ENCODE measurements at regions of chr4 and their contacts with region 1.

Region 1: GRCh38 chr4:88514557-88515511 is 8.7 kb downstream of the PYURF start:
- DNase-seq: no peak
- H3K4me3 Mint-ChIP-seq: no peak overlapping the region
- H3K27ac Mint-ChIP-seq: no peak overlapping the region
- H3K4me1 Mint-ChIP-seq: no peaks in the 10 kb centered on the region
- H3K27me3 Mint-ChIP-seq: no peaks in the 10 kb centered on the region

Region 2: GRCh38 chr4:88033309-88033708 is 481.5 kb before region 1 on chr4:
- CTCF ChIA-PET with region 1: interaction called, 5 read pairs
- POLR2A ChIA-PET with region 1: no interaction called
- intact Hi-C with region 1: loop called (anchors 1 kb)
- DNase-seq: peak; percentile 26
- H3K4me3 Mint-ChIP-seq: no peak overlapping the region
- H3K27ac Mint-ChIP-seq: no peak overlapping the region
- H3K4me1 Mint-ChIP-seq: peaks cover 4% of the 10 kb centered on the region
- H3K27me3 Mint-ChIP-seq: no peaks in the 10 kb centered on the region

Region 3: DNA sequence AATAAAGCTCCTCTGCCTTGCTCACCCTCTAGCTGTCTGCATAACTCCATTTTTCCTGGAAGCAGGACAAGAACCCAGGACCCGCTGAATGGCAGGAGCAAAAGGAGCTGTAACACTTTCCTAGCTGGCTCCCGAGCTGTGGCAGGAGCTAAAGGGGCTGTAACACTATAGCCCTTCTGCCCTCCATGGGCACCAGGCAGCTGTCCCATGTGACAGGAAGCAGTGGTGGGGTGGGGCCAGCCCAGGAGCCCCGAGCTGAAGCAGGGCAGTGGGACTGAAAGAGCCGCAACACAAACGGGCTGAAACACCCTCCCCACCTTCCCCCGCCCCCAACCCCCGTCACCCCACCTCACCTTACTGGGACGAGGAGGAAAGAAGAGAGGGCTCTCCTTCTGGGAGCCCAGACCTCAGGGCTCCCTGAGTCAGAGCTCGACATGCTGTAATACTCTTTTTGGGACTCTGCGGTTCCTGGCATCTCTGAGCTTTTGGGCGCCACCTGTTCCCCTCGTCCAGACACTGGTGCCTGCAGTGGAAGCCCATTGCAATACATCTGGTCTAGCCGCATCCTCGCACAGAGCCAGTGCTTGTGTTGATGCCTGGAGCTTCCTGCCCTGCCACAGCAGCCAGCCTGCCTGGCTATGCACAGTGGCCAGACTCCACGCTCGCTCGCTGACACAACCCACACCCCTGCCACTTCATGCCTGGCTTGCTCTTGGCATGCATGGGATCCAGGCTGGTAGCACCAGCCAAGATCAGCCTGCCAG is 269.8 kb before region 1 on chr4:
- CTCF ChIA-PET with region 1: interaction called, 10 read pairs
- POLR2A ChIA-PET with region 1: no interaction called
- intact Hi-C with region 1: no loop called
- DNase-seq: peak; percentile 54
- H3K4me3 Mint-ChIP-seq: peak overlapping the region; percentile 49
- H3K27ac Mint-ChIP-seq: no peak overlapping the region
- H3K4me1 Mint-ChIP-seq: peaks cover 10% of the 10 kb centered on the region
- H3K27me3 Mint-ChIP-seq: no peaks in the 10 kb centered on the region

Region 4: DNA sequence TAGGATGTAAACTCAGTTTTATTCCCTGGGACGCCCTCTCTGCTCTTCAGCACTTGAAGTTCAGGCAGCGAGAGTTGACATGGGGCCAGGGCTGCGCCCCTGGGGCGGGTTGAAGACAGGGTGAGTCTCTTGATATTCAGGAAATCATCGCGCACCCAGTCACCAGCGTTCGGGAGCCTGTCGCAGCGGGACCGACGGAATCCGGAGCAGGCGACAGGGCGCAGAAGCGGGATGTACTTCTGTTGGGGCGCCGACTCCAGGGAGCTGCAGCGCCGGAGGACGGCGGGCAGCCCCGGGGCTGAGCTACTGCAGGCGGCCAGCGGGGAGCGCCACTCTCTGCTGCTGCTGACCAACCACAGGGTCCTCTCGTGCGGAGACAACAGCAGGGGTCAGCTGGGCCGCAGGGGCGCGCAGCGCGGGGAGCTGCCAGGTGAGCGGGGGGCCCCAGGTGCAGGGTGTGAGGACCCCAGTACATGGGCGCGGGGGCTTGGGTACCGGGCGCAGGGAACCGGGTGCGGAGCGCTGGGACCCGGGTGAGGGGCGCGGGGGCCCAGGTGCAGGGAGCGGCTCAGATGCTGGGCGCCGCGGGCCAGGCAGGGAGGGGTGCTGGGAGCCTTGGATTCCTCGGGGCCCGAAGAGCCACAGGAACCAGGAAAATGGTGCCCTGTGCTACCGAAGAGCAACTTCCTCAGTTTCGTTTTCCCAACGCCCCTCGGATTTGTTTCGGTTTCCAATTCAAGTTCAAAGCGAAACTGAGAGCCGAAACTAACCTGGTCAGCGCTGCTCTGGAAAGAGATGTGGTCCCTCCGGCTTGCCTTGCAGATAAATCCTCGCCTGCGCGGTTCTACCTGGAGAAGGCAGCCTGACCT is 135.9 kb before region 1 on chr4 and contains the start of gene HERC6:
- CTCF ChIA-PET with region 1: interaction called, 8 read pairs
- POLR2A ChIA-PET with region 1: no interaction called
- intact Hi-C with region 1: loop called (anchors 1 kb)
- DNase-seq: peak; percentile 86
- H3K4me3 Mint-ChIP-seq: peak within 1 kb of the TSS; percentile 83
- H3K27ac Mint-ChIP-seq: peak within 1 kb of the TSS; percentile 85
- H3K4me1 Mint-ChIP-seq: peaks cover 49% of the 10 kb centered on the region
- H3K27me3 Mint-ChIP-seq: no peaks in the 10 kb centered on the region
- total RNA-seq, gene HERC6: 12.4 to 12.5 TPM

Region 5: DNA sequence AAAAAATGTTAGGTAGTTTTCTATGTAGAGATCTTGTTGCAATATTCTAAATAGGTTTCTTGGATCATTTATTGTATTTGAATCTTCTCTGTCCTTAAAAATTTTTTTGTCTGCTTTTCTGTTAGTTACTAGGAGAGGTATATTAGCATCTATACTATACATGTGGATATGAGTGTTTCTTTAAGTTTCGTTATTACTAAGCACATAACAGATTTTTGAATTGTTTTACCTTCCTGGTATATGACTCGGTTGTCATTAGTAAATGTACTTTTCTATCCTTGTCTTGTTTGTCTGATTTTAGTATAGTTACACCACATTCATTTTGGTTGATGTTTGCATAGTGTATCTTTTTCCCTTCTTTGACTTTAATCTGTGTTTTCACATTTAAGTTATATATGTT is 11.5 kb before region 1 on chr4:
- CTCF ChIA-PET with region 1: interaction called, 13 read pairs
- POLR2A ChIA-PET with region 1: interaction called, 3 read pairs
- intact Hi-C with region 1: no loop called
- DNase-seq: no peak
- H3K4me3 Mint-ChIP-seq: no peak overlapping the region
- H3K27ac Mint-ChIP-seq: no peak overlapping the region
- H3K4me1 Mint-ChIP-seq: peaks cover 4% of the 10 kb centered on the region
- H3K27me3 Mint-ChIP-seq: no peaks in the 10 kb centered on the region

Measured in activated CD4-positive, alpha-beta memory T cell treated with anti-CD3 and anti-CD28 coated beads for 36 hours (primary cell).